ENCODE measurements at regions of chr6 and their contacts with region 1.

Region 1: GRCh38 chr6:141552473-141552878 is 580.2 kb upstream of the GJE1 start:
- DNase-seq: peak; percentile 98
- H3K4me3 ChIP-seq: peak overlapping the region in 1 of 3 experiments; percentile 30
- H3K27ac ChIP-seq: peak overlapping the region; percentile 80
- H3K4me1 ChIP-seq: peaks cover 17% of the 10 kb centered on the region
- H3K27me3 ChIP-seq: no peaks in the 10 kb centered on the region
- CTCF ChIP-seq: no peak
- POLR2A ChIP-seq: peak; percentile 60

Region 2: DNA sequence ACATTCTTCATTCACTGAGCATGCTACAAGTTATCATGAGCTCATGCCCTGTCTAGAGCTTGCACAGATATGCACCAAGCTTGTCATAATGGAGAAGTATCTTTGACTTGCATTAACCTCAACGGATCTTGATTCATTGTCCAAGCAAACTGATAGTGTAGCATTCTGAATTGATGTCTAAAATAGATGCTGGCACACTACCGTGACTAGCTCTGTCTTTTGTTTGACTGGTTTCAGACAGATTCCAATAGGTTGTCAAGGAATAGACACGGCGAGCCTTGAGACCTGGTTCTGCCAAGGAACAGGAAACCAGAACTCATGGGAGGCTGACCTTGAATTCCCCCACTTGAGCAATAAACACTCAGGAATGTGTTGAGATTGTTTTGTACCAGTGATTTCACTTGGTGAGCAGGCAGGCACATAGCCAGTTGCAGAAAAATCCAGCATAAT is 572.8 kb before region 1 on chr6:
- CTCF ChIA-PET with region 1: no interaction called
- POLR2A ChIA-PET with region 1: no interaction called
- dilution Hi-C with region 1: no loop called
- intact Hi-C with region 1: loop called (anchors 2 kb)
- DNase-seq: peak; percentile 98
- H3K4me3 ChIP-seq: no peak overlapping the region
- H3K27ac ChIP-seq: peak overlapping the region; percentile 73
- H3K4me1 ChIP-seq: peaks cover 14% of the 10 kb centered on the region
- H3K27me3 ChIP-seq: no peaks in the 10 kb centered on the region
- CTCF ChIP-seq: no peak
- POLR2A ChIP-seq: no peak

Measured in endothelial cell of umbilical vein (primary cell).